Activated T-helper 1 cell treated with anti-CD3 and anti-CD28 coated beads, Interleukin-12 subunit alpha, Interleukin-12 subunit beta, Interleukin-2, Interleukin-4 antibody, amounts not matched to agents 30 ng/mL and 10 ng/mL and 1 ng/mL, durations not matched to agents 14 hours and 24 hours and 36 hours (primary cell): ENCODE measurements at regions of chr7 and their contacts with region 1.

Region 1: GRCh38 chr7:92731335-92732063 is 104.9 kb downstream of the CDK6 start:
- DNase-seq: no peak
- H3K4me3 Mint-ChIP-seq: peak overlapping the region; percentile 23
- H3K27ac Mint-ChIP-seq: peak overlapping the region; percentile 92
- H3K4me1 Mint-ChIP-seq: peaks cover 80% of the 10 kb centered on the region
- H3K27me3 Mint-ChIP-seq: no peaks in the 10 kb centered on the region

Region 2: GRCh38 chr7:92708111-92709042 is 23.1 kb before region 1 on chr7:
- intact Hi-C with region 1: loop called (anchors 1 kb)
- DNase-seq: no peak
- H3K4me3 Mint-ChIP-seq: no peak overlapping the region
- H3K27ac Mint-ChIP-seq: peak overlapping the region; percentile 84
- H3K4me1 Mint-ChIP-seq: peaks cover 59% of the 10 kb centered on the region
- H3K27me3 Mint-ChIP-seq: no peaks in the 10 kb centered on the region

Region 3: GRCh38 chr7:92717993-92718716 is 13.3 kb before region 1 on chr7:
- intact Hi-C with region 1: loop called (anchors 1 kb)
- DNase-seq: peak; percentile 72
- H3K4me3 Mint-ChIP-seq: peak overlapping the region; percentile 81
- H3K27ac Mint-ChIP-seq: peak overlapping the region; percentile 85
- H3K4me1 Mint-ChIP-seq: peaks cover 72% of the 10 kb centered on the region
- H3K27me3 Mint-ChIP-seq: no peaks in the 10 kb centered on the region

Region 4: DNA sequence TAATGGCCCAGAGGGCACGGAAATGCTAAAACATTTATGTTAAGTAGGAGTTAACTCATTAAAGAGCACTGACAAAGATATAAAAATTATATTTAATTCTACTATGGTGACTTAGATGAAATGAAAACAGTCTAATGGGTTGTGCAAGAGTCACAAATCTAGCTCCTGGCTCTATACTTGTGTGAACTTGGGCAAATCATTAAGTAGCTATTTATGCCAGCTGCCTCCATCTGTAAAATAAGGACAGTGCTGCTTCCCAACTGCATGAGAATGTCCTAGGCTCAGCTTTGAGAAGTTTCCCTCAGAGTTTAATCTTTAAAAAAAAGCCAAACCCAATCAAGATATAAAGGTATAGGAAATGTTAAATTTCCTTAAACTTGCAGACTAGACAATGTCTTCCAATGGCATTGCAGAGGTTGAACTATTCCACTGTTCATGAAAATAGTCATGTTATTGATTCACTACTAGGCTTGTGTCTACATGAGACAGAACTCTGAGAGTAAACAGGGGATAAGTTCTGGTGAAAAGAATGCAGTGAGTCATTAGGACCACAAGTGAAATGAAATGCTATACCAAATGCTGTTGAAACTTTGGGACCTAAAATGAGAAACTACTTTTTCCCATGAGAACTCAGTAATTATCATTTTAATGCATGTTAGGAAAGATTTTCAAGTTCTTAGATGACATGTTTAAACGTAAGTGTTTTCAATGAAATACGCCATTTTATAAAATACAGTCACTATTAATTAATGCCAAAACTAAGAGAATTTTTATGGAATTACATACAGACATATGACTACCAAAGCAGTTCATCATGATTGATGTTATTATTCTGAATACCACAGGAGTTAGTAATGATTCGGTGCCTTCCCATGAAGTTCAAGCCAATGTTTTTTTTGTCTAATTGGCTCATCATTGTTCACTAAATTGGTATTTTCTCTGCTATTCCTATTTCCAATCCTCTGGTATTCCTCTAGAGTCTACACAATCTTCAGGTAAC is 20.7 kb after region 1 on chr7:
- intact Hi-C with region 1: loop called (anchors 2 kb)
- DNase-seq: no peak
- H3K4me3 Mint-ChIP-seq: no peak overlapping the region
- H3K27ac Mint-ChIP-seq: peak overlapping the region; percentile 68
- H3K4me1 Mint-ChIP-seq: peaks cover 87% of the 10 kb centered on the region
- H3K27me3 Mint-ChIP-seq: no peaks in the 10 kb centered on the region

Region 5: DNA sequence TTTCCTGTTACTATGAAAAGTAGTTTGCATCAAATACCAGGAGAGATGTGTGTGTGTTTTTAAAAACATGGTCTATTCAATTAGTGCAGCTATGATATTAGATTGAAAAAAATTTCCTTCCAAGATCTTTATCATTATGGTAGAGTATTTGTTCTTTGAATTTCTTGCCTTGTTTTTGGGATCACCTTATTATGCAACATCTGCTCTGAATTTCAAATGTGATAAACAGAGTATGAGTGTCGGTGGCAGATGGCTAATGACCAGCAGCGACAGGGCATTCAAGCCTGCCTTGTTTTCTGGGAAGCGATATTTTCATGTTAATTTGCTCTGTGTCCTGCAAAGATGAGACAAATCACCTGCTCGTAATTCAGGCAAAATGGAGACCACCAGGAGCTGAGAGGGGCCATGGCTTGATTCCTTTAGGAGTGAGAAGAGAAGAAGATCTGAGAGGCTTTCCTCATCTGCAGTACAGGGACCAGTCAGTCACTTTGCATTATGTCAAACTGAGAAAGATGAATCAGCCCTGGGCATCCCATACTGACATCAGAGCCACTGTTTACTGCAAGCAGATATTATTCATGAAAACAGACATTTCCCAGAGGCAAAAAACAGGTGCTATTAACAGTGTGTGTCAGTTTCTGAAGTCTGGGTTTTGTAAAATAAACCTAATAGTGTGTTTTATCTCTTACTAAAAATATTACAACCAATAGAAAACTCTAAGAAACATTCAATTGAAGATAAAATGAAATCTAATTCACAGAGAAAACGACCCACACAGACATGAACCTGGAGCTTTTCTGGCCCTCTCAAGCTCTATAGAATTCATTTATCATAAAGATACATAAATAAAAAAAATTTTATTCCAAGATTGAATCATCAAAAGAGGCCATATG is 37.2 kb after region 1 on chr7:
- intact Hi-C with region 1: loop called (anchors 1 kb)
- DNase-seq: peak; percentile 20
- H3K4me3 Mint-ChIP-seq: peak overlapping the region; percentile 47
- H3K27ac Mint-ChIP-seq: peak overlapping the region; percentile 85
- H3K4me1 Mint-ChIP-seq: peaks cover 83% of the 10 kb centered on the region
- H3K27me3 Mint-ChIP-seq: no peaks in the 10 kb centered on the region

Region 6: GRCh38 chr7:93407233-93407632 is 675.7 kb after region 1 on chr7:
- intact Hi-C with region 1: no loop called
- DNase-seq: no peak
- H3K4me3 Mint-ChIP-seq: no peak overlapping the region
- H3K27ac Mint-ChIP-seq: no peak overlapping the region
- H3K4me1 Mint-ChIP-seq: no peaks in the 10 kb centered on the region
- H3K27me3 Mint-ChIP-seq: peaks cover 3% of the 10 kb centered on the region